ENCODE measurements at regions of chr16 and their contacts with region 1.

Region 1: DNA sequence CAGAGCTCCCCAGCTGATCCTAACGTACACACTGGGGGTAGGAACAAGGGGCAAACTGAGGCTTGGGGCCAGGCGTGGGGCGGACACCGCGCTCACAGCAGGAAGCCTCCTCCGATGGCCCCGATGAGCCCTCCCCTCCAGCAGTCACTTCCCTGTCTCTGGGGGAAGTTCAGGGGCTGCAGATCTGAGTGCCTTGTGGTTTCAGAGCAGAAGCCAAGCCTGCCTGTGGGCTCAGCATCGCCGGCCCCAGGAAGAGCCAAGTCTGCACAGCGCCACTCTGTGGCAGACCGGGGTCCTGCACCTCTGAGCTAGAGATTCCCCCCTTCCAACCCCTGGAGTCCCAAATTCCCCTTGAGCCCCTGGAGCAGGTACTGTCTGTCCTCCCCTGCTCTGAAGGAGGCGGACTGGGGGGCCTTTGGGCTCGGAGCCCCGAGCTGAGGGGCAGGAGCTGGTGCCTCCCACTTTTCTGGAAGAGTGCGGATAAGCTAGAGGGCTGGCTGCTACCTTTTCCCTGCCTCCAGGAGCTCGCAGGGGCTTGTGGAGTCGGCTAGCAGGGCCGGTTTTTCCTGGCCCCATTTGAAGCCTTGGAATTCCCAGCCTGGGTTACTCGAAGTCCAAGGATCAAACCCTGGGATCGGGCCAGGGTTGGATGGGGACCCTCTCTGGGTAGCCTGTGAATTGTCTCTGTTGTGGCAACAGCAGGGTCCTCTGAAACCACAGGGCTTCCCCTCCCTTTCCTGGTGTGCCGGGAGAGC is 2.9 kb downstream of the GSE1 start:
- DNase-seq: peak; percentile 86
- H3K4me3 ChIP-seq: peak overlapping the region; percentile 42 to 86; a peak in 2 of 4 replicates
- H3K27ac ChIP-seq: peak overlapping the region in 1 of 2 experiments; percentile 97; a peak in 2 of 4 replicates
- H3K4me1 ChIP-seq: peaks cover 9 to 64% of the 10 kb centered on the region in 2 experiments
- H3K27me3 ChIP-seq: no peaks in the 10 kb centered on the region
- CTCF ChIP-seq: peak; percentile 91
- EP300 ChIP-seq: no peak
- RAD21 ChIP-seq: peak; percentile 65

Region 2: GRCh38 chr16:85245307-85246172 is 370.5 kb before region 1 on chr16:
- CTCF ChIA-PET with region 1: interaction called, 10 read pairs
- POLR2A ChIA-PET with region 1: no interaction called
- DNase-seq: peak; percentile 82
- H3K4me3 ChIP-seq: no peak overlapping the region; a peak in 1 of 4 replicates
- H3K27ac ChIP-seq: peak overlapping the region in 1 of 2 experiments; percentile 59; a peak in 2 of 4 replicates
- H3K4me1 ChIP-seq: peaks cover 0 to 56% of the 10 kb centered on the region in 2 experiments; a peak in 1 of 4 replicates
- H3K27me3 ChIP-seq: no peaks in the 10 kb centered on the region
- CTCF ChIP-seq: peak; percentile 88
- EP300 ChIP-seq: no peak
- RAD21 ChIP-seq: peak; percentile 89

Region 3: DNA sequence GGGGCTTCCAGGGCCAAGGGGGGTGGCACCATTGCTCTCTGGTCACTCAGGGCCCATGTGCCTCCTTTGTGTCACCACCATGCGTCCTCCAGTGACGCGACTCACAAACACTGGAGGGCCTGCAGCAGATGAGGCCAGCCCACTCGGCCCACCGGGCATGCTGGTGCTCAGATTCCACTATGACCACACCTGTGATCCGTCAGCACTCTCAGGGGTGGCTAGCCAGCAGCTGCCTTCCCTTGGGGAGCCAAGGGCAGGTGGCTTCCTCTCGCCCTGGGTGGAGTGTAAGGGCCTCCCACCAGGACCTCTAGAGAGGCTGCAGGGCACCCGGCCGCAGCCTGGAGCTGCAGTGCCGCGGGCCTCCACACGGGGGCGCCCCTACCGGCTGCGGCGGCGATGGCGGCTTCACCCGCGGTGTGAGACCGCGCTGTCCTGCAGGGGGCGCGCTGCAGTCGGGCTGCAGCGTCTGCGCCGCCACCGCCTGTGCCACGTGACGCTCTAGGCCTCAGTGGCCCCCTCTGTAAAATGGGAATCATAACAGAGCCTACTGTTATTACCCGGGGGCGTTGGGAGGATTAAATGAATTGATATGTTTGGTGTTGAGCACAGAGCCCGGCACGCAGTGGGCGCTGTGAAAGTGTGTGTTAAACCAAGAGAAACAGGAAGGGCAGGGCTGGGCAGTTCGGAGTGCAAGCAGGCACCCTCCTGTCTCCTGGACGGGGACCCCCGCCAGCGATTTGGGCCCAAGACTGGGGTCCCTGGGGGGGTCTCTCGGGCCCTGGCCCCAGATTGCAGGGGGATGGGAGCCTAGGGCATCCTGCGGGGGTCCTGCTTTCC is 195.3 kb before region 1 on chr16:
- CTCF ChIA-PET with region 1: interaction called, 13 read pairs
- POLR2A ChIA-PET with region 1: interaction called, 4 read pairs
- DNase-seq: peak; percentile 85
- H3K4me3 ChIP-seq: peak overlapping the region in 1 of 2 experiments; percentile 32; a peak in 1 of 4 replicates
- H3K27ac ChIP-seq: no peak overlapping the region
- H3K4me1 ChIP-seq: peaks cover 0 to 61% of the 10 kb centered on the region in 2 experiments; a peak in 3 of 4 replicates
- H3K27me3 ChIP-seq: no peaks in the 10 kb centered on the region
- CTCF ChIP-seq: peak; percentile 76
- EP300 ChIP-seq: no peak
- RAD21 ChIP-seq: peak; percentile 39

Region 4: GRCh38 chr16:85564277-85565051 is 51.6 kb before region 1 on chr16:
- CTCF ChIA-PET with region 1: interaction called, 51 read pairs
- POLR2A ChIA-PET with region 1: interaction called, 4 read pairs
- DNase-seq: no peak
- H3K4me3 ChIP-seq: no peak overlapping the region
- H3K27ac ChIP-seq: peak overlapping the region in 1 of 2 experiments; percentile 89; a peak in 2 of 4 replicates
- H3K4me1 ChIP-seq: peaks cover 13 to 45% of the 10 kb centered on the region in 2 experiments; a peak in 3 of 4 replicates
- H3K27me3 ChIP-seq: no peaks in the 10 kb centered on the region
- CTCF ChIP-seq: peak; percentile 64
- EP300 ChIP-seq: no peak
- RAD21 ChIP-seq: no peak

Region 5: DNA sequence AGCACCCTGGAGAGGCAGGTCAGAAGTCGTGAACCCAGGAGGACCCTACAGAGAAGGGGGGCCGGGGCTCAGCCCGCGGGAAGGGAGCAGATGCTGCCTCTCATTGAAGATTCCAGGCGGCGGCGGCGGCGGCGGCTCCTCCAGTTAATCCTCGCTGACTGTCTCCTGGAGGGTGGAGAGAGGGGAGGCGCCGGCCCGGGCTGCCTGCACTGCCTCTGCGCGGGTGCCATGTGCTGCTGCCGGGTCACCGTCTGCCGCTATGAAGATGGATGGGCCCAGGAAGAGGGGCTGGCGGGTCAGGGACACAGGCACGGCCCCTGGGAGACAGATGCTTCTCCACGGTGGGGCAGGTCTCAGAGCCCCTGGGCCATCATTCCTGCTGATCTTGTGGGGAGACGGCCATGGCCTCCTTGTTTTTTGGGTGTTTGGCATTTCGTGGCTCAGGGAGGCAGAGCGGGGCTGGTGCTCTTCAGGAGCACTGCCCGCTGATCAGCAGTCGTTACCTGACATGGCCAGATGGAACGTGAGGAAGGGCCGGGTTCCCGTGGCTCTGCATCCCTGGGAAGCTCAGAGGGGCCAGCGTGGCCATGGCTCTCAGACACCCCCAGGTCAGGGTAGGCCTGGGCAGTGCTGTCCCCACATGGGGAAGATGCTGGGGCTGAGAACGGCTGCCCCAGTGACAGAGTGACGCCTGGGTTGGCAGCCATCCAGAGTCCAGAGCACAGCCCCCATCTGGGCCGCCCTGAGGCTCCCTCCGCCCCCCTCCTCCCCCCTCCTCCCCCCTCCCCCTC is 36.6 kb after region 1 on chr16:
- CTCF ChIA-PET with region 1: interaction called, 49 read pairs
- POLR2A ChIA-PET with region 1: interaction called, 4 read pairs
- DNase-seq: peak; percentile 83
- H3K4me3 ChIP-seq: no peak overlapping the region
- H3K27ac ChIP-seq: peak overlapping the region; percentile 63 to 99
- H3K4me1 ChIP-seq: peaks cover 17 to 67% of the 10 kb centered on the region in 2 experiments
- H3K27me3 ChIP-seq: no peaks in the 10 kb centered on the region
- CTCF ChIP-seq: no peak
- EP300 ChIP-seq: no peak
- RAD21 ChIP-seq: no peak

Region 6: GRCh38 chr16:85789773-85790172 is 173.7 kb after region 1 on chr16:
- CTCF ChIA-PET with region 1: no interaction called
- POLR2A ChIA-PET with region 1: no interaction called
- DNase-seq: no peak
- H3K4me3 ChIP-seq: no peak overlapping the region
- H3K27ac ChIP-seq: no peak overlapping the region
- H3K4me1 ChIP-seq: no peaks in the 10 kb centered on the region
- H3K27me3 ChIP-seq: no peaks in the 10 kb centered on the region
- CTCF ChIP-seq: no peak
- EP300 ChIP-seq: no peak
- RAD21 ChIP-seq: no peak